CD8-positive, alpha-beta T cell (primary cell): ENCODE measurements at regions of chr13 and their contacts with region 1.

Region 1: DNA sequence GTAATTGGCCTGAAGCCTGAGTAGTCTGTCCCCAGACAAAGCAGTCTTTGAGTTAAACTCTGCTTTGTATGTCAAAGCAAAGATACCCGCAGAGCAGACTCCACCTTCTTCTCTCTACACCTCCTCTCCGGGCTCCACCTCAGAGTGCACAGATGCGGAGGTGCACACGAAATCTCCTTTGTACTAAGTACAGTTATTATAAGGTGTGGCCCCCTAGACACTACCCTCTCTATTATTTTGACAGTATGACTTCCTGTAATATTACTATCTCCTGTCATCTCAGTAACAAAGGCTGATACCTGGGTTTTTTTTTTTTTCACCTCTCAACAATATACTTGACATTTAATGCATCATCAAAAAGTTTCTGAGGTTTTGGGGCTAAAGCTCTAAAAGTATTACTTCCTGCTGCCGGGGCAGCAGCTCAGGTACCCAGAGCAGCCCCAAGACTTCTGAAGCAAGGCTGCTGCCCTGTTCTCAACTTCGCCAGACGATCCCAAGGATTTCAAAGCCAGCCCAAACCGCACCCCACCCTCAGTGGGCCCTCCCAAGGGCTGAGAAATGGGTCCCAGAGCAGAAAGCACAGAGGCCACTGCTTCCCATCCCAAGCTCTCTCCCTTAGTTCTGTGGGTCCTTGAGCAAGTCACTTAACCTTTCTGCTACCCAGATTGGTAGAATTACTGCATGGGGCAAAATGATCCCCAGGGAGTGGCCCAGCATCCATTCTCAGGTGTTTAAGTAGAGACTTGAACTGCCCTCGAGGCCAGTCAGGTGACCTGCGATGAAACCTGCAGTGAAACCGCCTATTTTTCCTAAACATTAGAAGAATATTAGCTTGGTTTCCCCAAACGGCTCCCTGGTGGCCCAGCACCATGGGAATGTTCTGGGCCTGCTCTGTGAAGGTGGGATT is 180.6 kb downstream of the FOXO1 start:
- DNase-seq: peak; percentile 49 to 94 (median 73)
- ATAC-seq: peak; percentile 92
- H3K4me3 ChIP-seq: peak overlapping the region in 1 of 2 experiments; percentile 33
- H3K4me3 Mint-ChIP-seq: peak overlapping the region; percentile 43
- H3K27ac ChIP-seq: peak overlapping the region; percentile 53 to 61
- H3K27ac Mint-ChIP-seq: peak overlapping the region; percentile 93
- H3K4me1 ChIP-seq: peaks cover 92% of the 10 kb centered on the region
- H3K4me1 Mint-ChIP-seq: peaks cover 91% of the 10 kb centered on the region
- H3K27me3 ChIP-seq: no peaks in the 10 kb centered on the region
- H3K27me3 Mint-ChIP-seq: no peaks in the 10 kb centered on the region
- CTCF ChIP-seq: no peak

Region 2: GRCh38 chr13:39982745-39983144 is 503.1 kb before region 1 on chr13:
- CTCF ChIA-PET with region 1: no interaction called
- POLR2A ChIA-PET with region 1: no interaction called
- intact Hi-C with region 1: no loop called
- DNase-seq: no peak
- ATAC-seq: no peak
- H3K4me3 ChIP-seq: no peak overlapping the region
- H3K4me3 Mint-ChIP-seq: no peak overlapping the region
- H3K27ac ChIP-seq: no peak overlapping the region
- H3K27ac Mint-ChIP-seq: no peak overlapping the region
- H3K4me1 ChIP-seq: no peaks in the 10 kb centered on the region
- H3K4me1 Mint-ChIP-seq: no peaks in the 10 kb centered on the region
- H3K27me3 ChIP-seq: no peaks in the 10 kb centered on the region
- H3K27me3 Mint-ChIP-seq: peaks cover 5% of the 10 kb centered on the region
- CTCF ChIP-seq: no peak

Region 3: GRCh38 chr13:40318366-40318765 is 167.5 kb before region 1 on chr13:
- CTCF ChIA-PET with region 1: no interaction called
- POLR2A ChIA-PET with region 1: no interaction called
- intact Hi-C with region 1: no loop called
- DNase-seq: peak in 2 of 9 experiments; percentile 11 to 14
- ATAC-seq: no peak
- H3K4me3 ChIP-seq: no peak overlapping the region
- H3K4me3 Mint-ChIP-seq: no peak overlapping the region
- H3K27ac ChIP-seq: no peak overlapping the region
- H3K27ac Mint-ChIP-seq: no peak overlapping the region
- H3K4me1 ChIP-seq: peaks cover 25% of the 10 kb centered on the region
- H3K4me1 Mint-ChIP-seq: peaks cover 55% of the 10 kb centered on the region
- H3K27me3 ChIP-seq: no peaks in the 10 kb centered on the region
- H3K27me3 Mint-ChIP-seq: no peaks in the 10 kb centered on the region
- CTCF ChIP-seq: no peak

Region 4: DNA sequence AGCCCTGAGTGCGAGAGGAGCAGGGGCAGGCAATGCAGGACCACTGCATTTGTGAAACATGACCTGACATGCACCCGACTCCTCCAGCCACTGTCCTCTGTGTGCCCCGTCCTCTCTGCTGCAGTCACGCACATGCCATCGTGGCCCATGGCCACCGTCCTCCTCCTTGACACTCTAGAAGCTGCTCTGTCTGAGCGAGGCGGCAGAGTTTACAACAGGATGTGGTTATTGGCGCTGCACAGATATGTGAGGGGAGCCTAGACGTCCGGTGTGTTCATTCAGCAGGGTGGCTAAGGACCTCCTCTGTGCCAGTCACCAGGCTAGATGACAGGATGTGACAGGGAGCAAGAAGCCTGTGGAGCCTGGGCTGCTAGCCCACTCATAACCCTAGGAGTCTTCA is 97.2 kb before region 1 on chr13:
- CTCF ChIA-PET with region 1: no interaction called
- POLR2A ChIA-PET with region 1: interaction called, 8 read pairs
- intact Hi-C with region 1: loop called (anchors 2 kb)
- DNase-seq: peak; percentile 65 to 95 (median 85)
- ATAC-seq: peak; percentile 90
- H3K4me3 ChIP-seq: peak overlapping the region; percentile 48 to 53
- H3K4me3 Mint-ChIP-seq: peak overlapping the region; percentile 88
- H3K27ac ChIP-seq: peak overlapping the region; percentile 91 to 99
- H3K27ac Mint-ChIP-seq: peak overlapping the region; percentile 98
- H3K4me1 ChIP-seq: peaks cover 29% of the 10 kb centered on the region
- H3K4me1 Mint-ChIP-seq: peaks cover 73% of the 10 kb centered on the region
- H3K27me3 ChIP-seq: no peaks in the 10 kb centered on the region
- H3K27me3 Mint-ChIP-seq: no peaks in the 10 kb centered on the region
- CTCF ChIP-seq: no peak

Region 5: DNA sequence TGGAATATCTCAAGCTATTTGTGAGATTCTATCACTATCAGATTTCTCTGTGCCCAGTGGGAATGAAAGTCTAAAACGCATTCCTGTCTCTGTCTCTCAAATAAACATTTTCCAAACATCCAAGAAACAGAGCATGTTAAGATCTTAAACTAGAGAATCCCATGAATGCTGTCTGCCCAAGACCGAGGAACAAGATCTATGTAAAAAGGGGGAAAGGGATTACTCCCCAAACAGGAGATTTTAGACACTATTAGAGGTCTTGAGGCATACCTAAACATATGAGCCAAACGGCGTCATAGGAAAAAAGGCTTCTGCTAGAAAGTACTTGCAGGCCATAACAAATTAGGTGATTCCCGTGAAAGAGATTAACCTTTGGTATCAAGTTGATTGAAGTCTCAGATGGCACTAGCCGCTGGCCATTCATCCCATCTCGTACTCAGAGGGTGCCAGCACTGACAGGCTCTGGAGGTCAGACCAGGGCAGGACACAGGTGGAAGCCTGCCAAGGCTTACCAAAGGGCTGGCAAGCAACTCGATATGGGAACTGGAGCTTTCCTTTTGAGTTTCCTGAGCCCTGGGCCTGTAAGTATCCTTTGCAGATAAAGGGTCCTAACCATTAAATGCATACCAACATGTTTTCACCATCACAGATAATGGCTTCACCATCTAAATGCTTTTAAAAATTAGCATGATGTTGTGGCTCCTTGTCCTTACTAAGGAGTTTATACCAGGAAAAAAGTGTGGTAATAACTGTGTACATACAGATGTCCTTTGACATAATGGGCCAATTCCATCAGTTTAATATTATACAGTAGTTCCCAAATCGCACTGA is 44.7 kb before region 1 on chr13:
- CTCF ChIA-PET with region 1: no interaction called
- POLR2A ChIA-PET with region 1: no interaction called
- intact Hi-C with region 1: loop called in 1 of 2 experiments (anchors 5 kb)
- DNase-seq: no peak
- ATAC-seq: no peak
- H3K4me3 ChIP-seq: no peak overlapping the region
- H3K4me3 Mint-ChIP-seq: no peak overlapping the region
- H3K27ac ChIP-seq: no peak overlapping the region
- H3K27ac Mint-ChIP-seq: no peak overlapping the region
- H3K4me1 ChIP-seq: peaks cover 23% of the 10 kb centered on the region
- H3K4me1 Mint-ChIP-seq: peaks cover 30% of the 10 kb centered on the region
- H3K27me3 ChIP-seq: no peaks in the 10 kb centered on the region
- H3K27me3 Mint-ChIP-seq: no peaks in the 10 kb centered on the region
- CTCF ChIP-seq: no peak

Region 6: GRCh38 chr13:40536443-40537113 is 50.7 kb after region 1 on chr13:
- CTCF ChIA-PET with region 1: no interaction called
- POLR2A ChIA-PET with region 1: no interaction called
- intact Hi-C with region 1: no loop called
- DNase-seq: no peak
- ATAC-seq: no peak
- H3K4me3 ChIP-seq: no peak overlapping the region
- H3K4me3 Mint-ChIP-seq: no peak overlapping the region
- H3K27ac ChIP-seq: no peak overlapping the region
- H3K27ac Mint-ChIP-seq: no peak overlapping the region
- H3K4me1 ChIP-seq: no peaks in the 10 kb centered on the region
- H3K4me1 Mint-ChIP-seq: peaks cover 12% of the 10 kb centered on the region
- H3K27me3 ChIP-seq: no peaks in the 10 kb centered on the region
- H3K27me3 Mint-ChIP-seq: no peaks in the 10 kb centered on the region
- CTCF ChIP-seq: no peak

Region 7: DNA sequence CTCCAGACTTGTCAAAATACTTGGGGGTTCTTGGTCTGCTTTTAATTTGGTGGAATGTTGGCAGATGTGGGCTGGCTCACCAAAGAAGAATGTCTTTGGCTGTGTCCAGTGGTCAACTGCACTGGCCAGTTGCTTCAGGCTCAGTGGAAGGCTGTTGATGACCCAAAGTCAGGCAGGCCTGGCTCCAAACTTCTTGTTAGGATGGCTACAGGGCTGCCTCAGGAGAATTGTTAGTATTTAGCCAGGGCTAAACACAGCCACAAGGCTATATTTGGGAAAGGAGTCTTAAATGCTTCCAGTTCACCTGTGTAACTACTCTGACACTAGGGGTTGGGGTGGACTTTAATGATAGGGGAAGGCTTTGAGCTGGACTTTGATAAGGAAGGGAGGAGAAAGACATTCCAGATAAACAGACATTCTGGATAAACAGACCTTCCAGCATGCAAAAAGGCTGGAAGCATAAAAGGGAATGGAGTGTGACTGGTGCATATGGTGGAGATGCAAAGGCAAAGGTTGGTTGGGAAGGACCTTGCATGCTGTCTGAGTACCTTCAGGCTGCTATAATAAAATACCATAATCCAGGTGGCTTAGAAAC is 63.7 kb after region 1 on chr13:
- CTCF ChIA-PET with region 1: no interaction called
- POLR2A ChIA-PET with region 1: no interaction called
- intact Hi-C with region 1: loop called in 1 of 2 experiments (anchors 5 kb)
- DNase-seq: no peak
- ATAC-seq: no peak
- H3K4me3 ChIP-seq: no peak overlapping the region
- H3K4me3 Mint-ChIP-seq: no peak overlapping the region
- H3K27ac ChIP-seq: no peak overlapping the region
- H3K27ac Mint-ChIP-seq: peak overlapping the region; percentile 28
- H3K4me1 ChIP-seq: peaks cover 19% of the 10 kb centered on the region
- H3K4me1 Mint-ChIP-seq: peaks cover 46% of the 10 kb centered on the region
- H3K27me3 ChIP-seq: no peaks in the 10 kb centered on the region
- H3K27me3 Mint-ChIP-seq: no peaks in the 10 kb centered on the region
- CTCF ChIP-seq: no peak

Region 8: DNA sequence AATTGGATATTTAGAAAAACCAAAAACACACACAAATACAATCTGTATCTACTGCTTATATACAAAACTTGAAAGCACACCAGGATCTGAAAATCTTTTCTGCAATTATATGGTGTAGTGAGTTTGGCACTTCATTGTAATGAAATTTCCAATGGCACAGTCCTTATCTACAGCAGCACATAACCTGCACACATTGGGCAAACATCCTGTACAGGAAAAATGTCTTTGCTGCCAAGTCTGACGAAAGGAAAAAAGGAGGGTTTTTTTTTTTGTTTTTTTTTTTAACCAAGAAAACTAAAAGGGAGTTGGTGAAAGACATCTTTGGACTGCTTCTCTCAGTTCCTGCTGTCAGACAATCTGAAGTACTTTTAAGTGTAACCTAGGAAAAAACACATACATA is 72.8 kb after region 1 on chr13:
- CTCF ChIA-PET with region 1: no interaction called
- POLR2A ChIA-PET with region 1: no interaction called
- intact Hi-C with region 1: loop called (anchors 5 kb)
- DNase-seq: no peak
- ATAC-seq: no peak
- H3K4me3 ChIP-seq: no peak overlapping the region
- H3K4me3 Mint-ChIP-seq: peak overlapping the region; percentile 59
- H3K27ac ChIP-seq: no peak overlapping the region
- H3K27ac Mint-ChIP-seq: peak overlapping the region; percentile 75
- H3K4me1 ChIP-seq: peaks cover 57% of the 10 kb centered on the region
- H3K4me1 Mint-ChIP-seq: peaks cover 88% of the 10 kb centered on the region
- H3K27me3 ChIP-seq: no peaks in the 10 kb centered on the region
- H3K27me3 Mint-ChIP-seq: no peaks in the 10 kb centered on the region
- CTCF ChIP-seq: no peak

Region 9: DNA sequence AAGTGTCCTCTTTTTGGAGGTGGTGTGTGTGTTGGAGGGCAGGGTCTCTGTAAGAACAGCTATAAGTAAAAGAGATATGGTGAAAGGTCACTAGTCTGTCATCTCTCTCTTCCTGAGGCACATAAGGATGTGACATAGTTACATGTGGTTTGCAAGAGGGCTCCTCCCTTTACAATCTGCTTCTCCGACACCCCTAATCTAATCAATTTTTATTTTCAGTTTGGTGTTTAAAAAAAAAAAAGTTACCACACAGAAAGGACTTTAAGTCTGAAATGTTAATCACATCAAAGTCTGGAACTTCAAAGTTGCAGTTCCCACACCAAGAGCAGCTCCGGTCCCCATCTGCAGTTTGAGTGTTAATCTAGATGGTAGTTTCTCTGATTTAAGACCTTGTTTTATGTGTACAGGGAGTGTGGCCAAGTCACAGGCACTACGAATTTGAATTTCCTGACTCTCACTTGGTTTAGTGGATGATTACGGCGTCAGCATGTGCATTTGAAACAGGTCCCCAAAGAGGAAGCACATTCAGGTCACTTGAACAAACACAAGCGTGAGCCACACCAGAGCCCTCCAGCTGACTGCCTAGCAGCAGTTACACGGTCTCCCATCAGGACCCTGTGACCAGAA is 127.4 kb after region 1 on chr13:
- CTCF ChIA-PET with region 1: interaction called, 3 read pairs
- POLR2A ChIA-PET with region 1: interaction called, 9 read pairs
- intact Hi-C with region 1: loop called (anchors 2 to 5 kb)
- DNase-seq: peak; percentile 25 to 89 (median 60)
- ATAC-seq: peak; percentile 84
- H3K4me3 ChIP-seq: peak overlapping the region; percentile 21
- H3K4me3 Mint-ChIP-seq: peak overlapping the region; percentile 79
- H3K27ac ChIP-seq: peak overlapping the region; percentile 77 to 96
- H3K27ac Mint-ChIP-seq: peak overlapping the region; percentile 92
- H3K4me1 ChIP-seq: peaks cover 97% of the 10 kb centered on the region
- H3K4me1 Mint-ChIP-seq: peaks cover 95% of the 10 kb centered on the region
- H3K27me3 ChIP-seq: no peaks in the 10 kb centered on the region
- H3K27me3 Mint-ChIP-seq: no peaks in the 10 kb centered on the region
- CTCF ChIP-seq: no peak